K562 (cell line): ENCODE measurements at regions of chr2 and their contacts with region 1.

Region 1: GRCh38 chr2:60484133-60484645 is 69.3 kb downstream of the BCL11A start:
- DNase-seq: no peak
- ATAC-seq: no peak
- H3K4me3 ChIP-seq: no peak overlapping the region
- H3K27ac ChIP-seq: no peak overlapping the region
- H3K4me1 ChIP-seq: no peaks in the 10 kb centered on the region
- H3K27me3 ChIP-seq: peaks cover 6 to 9% of the 10 kb centered on the region in 2 experiments; a peak in 4 of 5 replicates
- CTCF ChIP-seq: no peak
- EP300 ChIP-seq: no peak
- POLR2A ChIP-seq: no peak
- RAD21 ChIP-seq: no peak

Region 2: GRCh38 chr2:60459851-60460250 is 24.3 kb before region 1 on chr2:
- CTCF ChIA-PET with region 1: no interaction called
- POLR2A ChIA-PET with region 1: no interaction called
- in situ Hi-C with region 1: no loop called
- intact Hi-C with region 1: loop called (anchors 2 kb)
- DNase-seq: no peak
- ATAC-seq: no peak
- H3K4me3 ChIP-seq: no peak overlapping the region
- H3K27ac ChIP-seq: no peak overlapping the region
- H3K4me1 ChIP-seq: peaks cover 0 to 11% of the 10 kb centered on the region in 2 experiments; a peak in 2 of 5 replicates
- H3K27me3 ChIP-seq: peaks cover 8 to 24% of the 10 kb centered on the region in 2 experiments; a peak in 4 of 5 replicates
- CTCF ChIP-seq: no peak
- EP300 ChIP-seq: no peak
- POLR2A ChIP-seq: no peak
- RAD21 ChIP-seq: no peak

Region 3: DNA sequence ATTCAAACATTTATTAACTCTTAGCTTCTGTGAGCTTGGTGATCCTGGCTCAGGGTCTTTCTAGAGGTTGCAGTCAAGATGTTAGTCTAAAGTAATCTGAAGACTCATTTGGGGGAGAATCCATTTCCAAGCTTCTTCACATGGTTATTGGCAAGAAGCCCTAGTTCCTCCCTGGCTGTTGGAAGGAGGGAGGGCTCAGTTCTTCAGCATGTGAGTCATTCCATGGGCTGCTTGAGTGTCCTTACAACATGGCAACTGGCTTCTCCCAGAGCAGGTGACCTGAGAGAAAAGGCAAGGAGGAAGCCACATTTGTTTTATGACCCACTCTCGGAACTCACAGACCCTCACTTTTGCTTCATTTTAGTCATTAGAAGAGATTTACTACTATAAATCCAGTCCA is 667.2 kb after region 1 on chr2:
- CTCF ChIA-PET with region 1: no interaction called
- POLR2A ChIA-PET with region 1: no interaction called
- in situ Hi-C with region 1: no loop called
- intact Hi-C with region 1: no loop called
- DNase-seq: peak in 1 of 4 experiments; percentile 20
- ATAC-seq: peak; percentile 56; the same call in 2 of the 3 replicates
- H3K4me3 ChIP-seq: no peak overlapping the region
- H3K27ac ChIP-seq: no peak overlapping the region
- H3K4me1 ChIP-seq: no peaks in the 10 kb centered on the region; a peak in 1 of 5 replicates
- H3K27me3 ChIP-seq: no peaks in the 10 kb centered on the region
- CTCF ChIP-seq: no peak
- EP300 ChIP-seq: no peak
- POLR2A ChIP-seq: no peak
- RAD21 ChIP-seq: no peak